Activated naive CD8-positive, alpha-beta T cell treated with anti-CD3 and anti-CD28 coated beads, Interleukin-2, amount 10 ng/mL, durations not matched to agents 7 days and 5 days (primary cell): ENCODE measurements at regions of chr17 and their contacts with region 1.

Region 1: GRCh38 chr17:2214047-2214928 is 89.3 kb downstream of the SMG6 start:
- DNase-seq: no peak
- ATAC-seq: no peak
- H3K4me3 Mint-ChIP-seq: peak overlapping the region; percentile 85
- H3K27ac Mint-ChIP-seq: peak overlapping the region; percentile 93
- H3K4me1 Mint-ChIP-seq: peaks cover 52% of the 10 kb centered on the region
- H3K27me3 Mint-ChIP-seq: no peaks in the 10 kb centered on the region

Region 2: DNA sequence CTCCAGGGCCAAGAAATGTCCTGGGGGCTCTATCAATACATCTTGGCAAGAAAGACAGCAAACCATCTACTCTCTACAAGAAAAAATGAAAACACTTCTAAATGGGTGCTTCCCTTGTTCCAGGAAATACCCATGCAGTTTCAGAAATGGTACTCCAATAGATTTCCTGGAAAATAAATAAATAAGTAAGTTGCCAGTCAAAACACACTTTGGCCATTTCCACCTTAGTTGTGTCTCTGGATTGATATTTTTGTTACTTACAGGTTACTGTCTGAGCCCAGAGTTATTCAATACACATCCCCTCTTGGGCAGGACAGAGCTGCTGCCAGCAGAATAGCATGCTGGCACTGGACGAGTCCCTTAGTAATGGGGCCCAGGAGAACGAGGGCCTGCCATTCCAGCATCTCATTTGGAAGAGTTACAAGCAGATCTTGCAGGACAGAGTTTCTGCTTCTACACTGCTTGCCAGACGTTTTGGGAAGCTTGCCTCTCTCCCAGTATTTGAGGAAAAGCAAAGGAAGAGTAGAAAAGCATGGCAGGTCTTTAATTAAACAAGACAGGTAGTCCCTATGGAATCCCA is 11.2 kb before region 1 on chr17:
- POLR2A ChIA-PET with region 1: interaction called, 12 read pairs
- DNase-seq: no peak
- ATAC-seq: peak; percentile 54
- H3K4me3 Mint-ChIP-seq: peak overlapping the region; percentile 76
- H3K27ac Mint-ChIP-seq: peak overlapping the region; percentile 88
- H3K4me1 Mint-ChIP-seq: peaks cover 40% of the 10 kb centered on the region
- H3K27me3 Mint-ChIP-seq: no peaks in the 10 kb centered on the region

Region 3: DNA sequence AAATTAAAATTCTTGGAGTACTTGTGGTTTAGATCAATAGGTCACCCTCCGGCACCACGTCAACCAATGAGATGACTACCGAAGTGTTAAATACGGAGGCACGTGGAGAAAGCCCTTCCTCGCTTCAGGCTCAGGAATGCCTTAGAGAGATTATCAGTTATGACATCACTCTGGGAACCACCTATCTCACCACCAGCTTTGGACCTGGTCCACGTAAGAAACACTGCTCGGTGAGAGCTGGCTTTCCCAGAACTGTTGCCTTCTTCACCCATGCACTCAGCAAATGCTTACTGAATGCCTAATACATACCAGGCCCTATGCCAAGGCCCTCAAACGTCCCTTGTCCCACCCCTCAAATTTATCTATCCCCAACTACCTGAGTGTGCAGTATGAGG is 18.0 kb after region 1 on chr17:
- POLR2A ChIA-PET with region 1: no interaction called
- DNase-seq: no peak
- ATAC-seq: no peak
- H3K4me3 Mint-ChIP-seq: no peak overlapping the region
- H3K27ac Mint-ChIP-seq: no peak overlapping the region
- H3K4me1 Mint-ChIP-seq: peaks cover 49% of the 10 kb centered on the region
- H3K27me3 Mint-ChIP-seq: no peaks in the 10 kb centered on the region